Gastrocnemius medialis (tissue), 4 donors: ENCODE measurements at regions of chr1 and their contacts with region 1.

Region 1: GRCh38 chr1:248873409-248873992 is 14.6 kb upstream of the ZNF692 start:
- DNase-seq: peak; percentile 85 to 93
- ATAC-seq: peak; percentile 90 to 92
- H3K4me3 ChIP-seq: peak overlapping the region; percentile 72 to 83 (median 74)
- H3K27ac ChIP-seq: peak overlapping the region; percentile 90 to 98 (median 93)
- H3K4me1 ChIP-seq: no peaks in the 10 kb centered on the region
- H3K27me3 ChIP-seq: no peaks in the 10 kb centered on the region
- CTCF ChIP-seq: no peak
- POLR2A ChIP-seq: peak in 1 of 2 donors; percentile 31

Region 2: DNA sequence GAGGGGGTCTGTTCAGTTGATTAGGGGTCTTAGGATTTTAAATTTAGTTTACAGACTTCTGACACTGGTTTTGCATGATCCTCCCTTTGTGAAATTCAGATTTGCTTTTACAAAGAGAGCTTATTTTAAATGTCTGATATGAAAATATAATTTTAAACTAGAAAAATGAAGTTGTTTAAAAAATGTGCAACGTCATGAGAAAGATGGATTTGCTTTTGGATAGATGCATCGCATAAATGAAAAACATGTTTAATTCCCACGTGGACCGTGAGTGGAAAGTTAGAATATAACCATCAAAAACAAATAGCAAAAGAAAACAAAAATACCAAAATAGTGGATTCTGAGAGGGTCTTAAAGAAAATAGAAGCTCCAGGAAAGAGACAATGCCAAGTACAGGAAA is 402.3 kb before region 1 on chr1:
- in situ Hi-C with region 1: no loop called
- intact Hi-C with region 1: no loop called
- DNase-seq: no peak
- ATAC-seq: no peak
- H3K4me3 ChIP-seq: no peak overlapping the region
- H3K27ac ChIP-seq: no peak overlapping the region
- H3K4me1 ChIP-seq: no peaks in the 10 kb centered on the region
- H3K27me3 ChIP-seq: no peaks in the 10 kb centered on the region
- CTCF ChIP-seq: no peak
- POLR2A ChIP-seq: no peak

Region 3: DNA sequence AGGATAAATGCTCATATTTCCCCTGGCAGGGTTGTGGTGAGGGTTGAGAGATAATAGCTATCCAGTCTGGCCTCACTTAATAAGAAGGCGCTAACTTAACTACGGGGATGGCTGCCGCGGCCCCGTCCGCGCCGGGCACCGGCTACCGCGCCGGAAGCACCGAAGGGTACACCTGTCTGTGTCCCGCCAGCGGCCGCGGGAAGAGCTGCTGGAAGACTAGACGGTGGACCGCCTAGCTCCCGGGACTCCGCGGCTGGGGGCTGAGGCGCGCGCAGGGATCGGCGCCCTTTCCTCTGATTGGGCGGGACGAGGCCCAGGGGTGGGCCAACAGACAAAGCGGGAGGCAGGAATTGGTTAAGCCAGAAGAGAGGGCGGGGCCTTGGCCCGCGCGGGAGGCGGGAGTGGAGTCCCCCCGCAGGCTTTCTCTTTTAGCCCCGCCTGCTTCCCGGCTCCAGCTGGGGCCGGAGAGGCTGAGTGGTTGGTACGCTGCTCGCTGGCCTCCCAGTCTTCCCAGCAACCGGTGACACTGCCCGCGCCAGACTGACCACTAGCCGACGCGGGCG is 35.6 kb before region 1 on chr1 and contains the start of gene ZNF672:
- in situ Hi-C with region 1: no loop called
- intact Hi-C with region 1: loop called (anchors 1 kb)
- DNase-seq: peak; percentile 98 to 99
- ATAC-seq: peak; percentile 82 to 84
- H3K4me3 ChIP-seq: peak within 1 kb of the TSS; percentile 68 to 98 (median 83)
- H3K27ac ChIP-seq: peak within 1 kb of the TSS; percentile 95 to 100 (median 98)
- H3K4me1 ChIP-seq: peaks cover 37 to 44% of the 10 kb centered on the region in 2 donors
- H3K27me3 ChIP-seq: no peaks in the 10 kb centered on the region
- CTCF ChIP-seq: no peak
- POLR2A ChIP-seq: no peak
- total RNA-seq, gene ZNF672: 41.9 to 81.0 (median 59.0) TPM

Region 4: GRCh38 chr1:248906009-248906752 is 32.7 kb after region 1 on chr1 and contains the start of gene PGBD2:
- in situ Hi-C with region 1: no loop called
- intact Hi-C with region 1: loop called (anchors 1 kb)
- DNase-seq: peak; percentile 80 to 84
- ATAC-seq: peak; percentile 92 to 94
- H3K4me3 ChIP-seq: peak within 1 kb of the TSS; percentile 65 to 95 (median 84)
- H3K27ac ChIP-seq: peak within 1 kb of the TSS; percentile 82 to 95 (median 87)
- H3K4me1 ChIP-seq: peaks cover 6 to 9% of the 10 kb centered on the region in 2 donors
- H3K27me3 ChIP-seq: peaks cover 0 to 3% (median 0%) of the 10 kb centered on the region in 3 donors
- CTCF ChIP-seq: peak; percentile 17 to 67 (median 63)
- POLR2A ChIP-seq: peak; percentile 59 to 71
- total RNA-seq, gene PGBD2: 0.22 to 2.8 (median 2.0) TPM